ENCODE measurements at regions of chr16 and their contacts with region 1.

Region 1: DNA sequence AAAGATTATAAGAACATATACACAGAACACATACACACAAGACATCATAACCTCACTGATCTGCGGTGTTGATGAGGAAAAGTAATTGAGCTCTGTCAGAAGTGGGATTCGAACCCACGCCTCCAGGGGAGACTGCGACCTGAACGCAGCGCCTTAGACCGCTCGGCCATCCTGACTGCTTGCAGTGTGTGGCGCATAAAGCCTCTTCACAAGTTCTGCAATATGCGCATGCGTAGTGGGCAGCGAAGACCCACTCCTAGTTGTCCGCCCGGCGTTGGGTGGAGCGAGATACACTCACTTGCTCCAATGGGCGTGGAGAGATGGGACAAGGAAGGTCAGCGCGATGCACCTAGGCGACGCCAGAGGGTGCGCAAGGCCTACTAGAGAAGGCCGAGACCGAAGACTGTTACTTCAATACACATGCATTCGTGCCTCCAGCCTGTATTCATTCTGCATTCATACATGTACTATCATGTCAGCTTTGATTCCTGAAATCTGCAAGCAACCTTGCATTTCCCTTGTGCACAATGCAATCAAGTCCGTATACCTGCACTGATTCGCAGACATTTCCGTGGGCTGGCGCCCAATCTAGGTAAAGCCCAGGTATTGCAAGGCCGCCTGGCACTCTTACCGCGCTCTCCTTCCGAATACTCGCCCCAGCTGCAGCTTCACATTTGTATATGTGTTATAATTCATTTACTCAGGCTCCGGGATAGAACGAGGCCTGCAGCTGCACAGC is 16.1 kb upstream of the PLLP start:
- DNase-seq: peak; percentile 90
- H3K4me3 ChIP-seq: peak overlapping the region; percentile 64
- CTCF ChIP-seq: peak; percentile 95

Region 2: DNA sequence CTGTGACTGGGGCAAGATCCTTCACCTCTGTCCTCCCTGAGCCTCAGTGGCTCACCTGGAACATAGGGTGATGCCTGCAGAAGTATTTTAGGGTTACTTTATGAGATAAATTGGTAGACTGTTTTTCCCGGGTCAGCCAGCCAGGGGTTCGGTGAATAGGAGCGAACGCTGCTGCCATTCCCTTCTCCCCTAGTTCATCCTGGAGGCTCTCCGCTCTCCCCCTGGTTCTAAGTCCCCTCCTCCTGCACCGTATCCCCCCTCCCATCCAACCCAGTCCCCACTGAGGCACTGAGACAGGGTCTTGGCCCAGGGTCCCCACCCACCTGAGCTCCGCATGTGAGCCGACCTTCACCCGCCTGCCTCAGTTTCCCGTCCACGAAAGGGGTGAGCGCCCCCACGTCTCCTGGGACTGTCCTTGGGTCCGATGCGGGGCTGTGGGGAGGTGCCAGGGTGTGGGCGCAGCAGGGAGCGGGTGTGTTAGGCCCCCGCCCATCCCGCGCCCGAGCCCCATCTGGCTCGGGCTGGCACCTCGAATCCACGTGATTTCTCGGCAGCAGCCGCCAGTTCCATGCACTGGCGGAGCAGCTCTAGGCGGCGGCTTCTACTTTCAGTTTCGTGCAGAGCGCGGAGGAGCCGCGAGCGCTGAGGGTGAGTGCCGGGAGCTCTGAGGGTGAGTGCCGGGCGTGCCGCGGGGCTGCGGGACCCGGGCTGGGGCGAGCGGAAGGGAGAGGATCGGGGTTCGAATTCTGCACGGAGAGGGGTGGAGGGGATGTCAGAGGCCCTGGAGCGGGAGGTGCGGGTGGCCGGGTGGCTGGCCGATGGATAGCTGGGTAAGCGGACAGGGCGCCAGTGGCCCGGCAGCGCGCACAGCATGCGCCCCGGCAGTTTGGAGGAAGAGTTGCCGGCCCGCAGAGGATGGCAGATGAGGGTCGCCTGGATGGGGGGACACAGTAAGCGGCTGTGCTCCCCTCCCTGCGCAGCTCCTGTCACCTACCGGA is 311.3 kb before region 1 on chr16 and contains the start of gene NLRC5:
- CTCF ChIA-PET with region 1: no interaction called
- POLR2A ChIA-PET with region 1: no interaction called
- DNase-seq: no peak
- H3K4me3 ChIP-seq: peak within 1 kb of the TSS; percentile 78
- CTCF ChIP-seq: no peak

Region 3: DNA sequence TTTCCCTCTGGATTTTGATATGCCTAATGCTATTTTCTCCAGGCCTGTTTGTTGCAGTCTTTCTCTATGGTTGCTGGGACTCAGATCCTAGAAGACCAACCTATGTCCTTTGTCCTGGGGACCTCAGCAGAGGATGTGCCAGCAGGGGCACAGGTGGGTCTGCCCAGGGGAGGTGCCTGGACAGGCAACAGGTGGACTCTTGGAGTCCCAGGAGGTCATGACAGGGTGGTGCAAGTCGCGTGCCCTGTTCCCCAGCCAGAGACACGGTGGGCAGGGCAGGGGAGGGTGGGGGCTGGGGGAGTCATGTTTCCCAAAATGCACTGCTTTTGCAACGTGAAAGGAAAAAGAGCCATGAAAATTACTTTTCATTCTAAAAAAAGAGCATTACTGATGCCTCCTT is 10.2 kb after region 1 on chr16:
- CTCF ChIA-PET with region 1: interaction called, 27 read pairs
- POLR2A ChIA-PET with region 1: interaction called, 4 read pairs
- DNase-seq: no peak
- H3K4me3 ChIP-seq: no peak overlapping the region
- CTCF ChIP-seq: no peak

Region 4: DNA sequence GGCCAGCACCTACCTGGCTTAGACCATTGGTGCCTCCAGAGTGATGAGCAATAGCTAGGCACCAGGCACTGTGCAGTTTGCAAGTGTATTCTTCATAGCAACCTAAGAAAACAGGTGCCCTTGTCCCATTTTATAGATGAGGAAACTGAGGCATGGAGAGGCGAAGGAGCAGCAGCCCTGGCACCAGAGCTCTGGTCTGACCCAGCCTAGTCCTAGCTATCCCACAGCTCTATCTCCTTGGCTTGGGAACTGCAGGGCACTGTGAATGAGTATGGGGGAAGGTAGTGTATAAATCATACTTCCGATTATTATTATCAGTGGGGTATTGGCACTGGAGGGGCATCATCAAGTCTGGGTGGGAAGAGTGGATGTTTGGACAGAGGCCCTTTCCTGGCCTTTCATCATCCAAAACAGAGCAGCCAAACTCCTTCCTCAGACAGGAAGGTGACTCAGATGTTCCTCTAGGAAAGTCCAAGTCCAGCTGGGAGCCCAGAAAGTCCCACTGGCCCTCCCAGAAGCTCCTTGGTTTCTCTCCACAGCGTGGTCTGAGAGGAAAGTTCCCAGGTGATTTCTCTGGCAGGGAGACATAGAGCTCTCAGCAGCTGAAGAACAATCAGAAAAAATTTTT is 15.9 kb after region 1 on chr16:
- CTCF ChIA-PET with region 1: interaction called, 27 read pairs
- POLR2A ChIA-PET with region 1: interaction called, 4 read pairs
- DNase-seq: peak; percentile 58
- H3K4me3 ChIP-seq: no peak overlapping the region
- CTCF ChIP-seq: no peak

Region 5: GRCh38 chr16:57383276-57384247 is 83.0 kb after region 1 on chr16:
- CTCF ChIA-PET with region 1: no interaction called
- POLR2A ChIA-PET with region 1: no interaction called
- DNase-seq: no peak
- H3K4me3 ChIP-seq: no peak overlapping the region
- CTCF ChIP-seq: no peak

Region 6: DNA sequence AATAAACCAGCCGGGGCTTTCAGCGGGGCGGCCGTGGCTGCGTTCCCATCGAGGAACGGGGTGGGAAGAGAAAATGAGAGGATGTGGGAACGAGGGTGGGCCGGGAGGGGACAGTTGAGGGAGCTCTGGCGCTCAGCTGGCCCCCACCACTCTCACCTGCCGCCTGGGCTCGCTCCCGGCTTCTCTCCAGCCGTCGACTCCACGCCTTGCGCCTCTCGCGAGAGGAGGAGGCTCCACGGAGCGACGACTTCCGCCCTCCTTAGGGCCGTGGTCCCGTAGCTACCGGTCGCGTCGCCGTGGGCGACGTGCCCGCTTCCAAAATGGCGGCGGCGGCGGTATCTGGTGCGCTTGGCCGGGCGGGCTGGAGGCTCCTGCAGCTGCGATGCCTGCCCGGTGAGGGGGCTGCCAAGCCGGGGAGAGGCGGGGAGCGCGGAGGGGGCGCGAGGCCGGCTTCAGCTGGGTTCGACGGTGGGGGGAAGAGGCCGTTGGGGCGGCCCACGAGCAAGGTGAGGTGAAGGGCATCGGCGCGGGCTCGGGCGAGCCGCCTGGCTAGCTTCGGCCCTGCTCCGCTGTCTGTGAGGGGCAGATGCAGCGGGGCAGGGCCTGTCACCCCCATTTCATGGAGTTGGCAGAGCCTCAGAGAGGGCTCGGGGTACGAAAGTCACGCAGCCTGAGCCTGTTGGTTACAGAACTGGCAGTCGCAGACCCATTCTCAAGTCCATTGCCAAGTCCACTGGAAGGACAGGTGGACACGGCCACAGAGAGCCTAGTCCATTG is 146.8 kb after region 1 on chr16 and contains the starts of genes CIAPIN1 and COQ9:
- CTCF ChIA-PET with region 1: interaction called, 12 read pairs
- POLR2A ChIA-PET with region 1: interaction called, 4 read pairs
- DNase-seq: peak; percentile 33
- H3K4me3 ChIP-seq: peak within 1 kb of the TSS; percentile 84
- CTCF ChIP-seq: no peak